Activated CD4-positive, alpha-beta memory T cell treated with anti-CD3 and anti-CD28 coated beads, Interleukin-2, amount 10 ng/mL, durations not matched to agents 7 days and 5 days (primary cell): ENCODE measurements at regions of chr2 and their contacts with region 1.

Region 1: DNA sequence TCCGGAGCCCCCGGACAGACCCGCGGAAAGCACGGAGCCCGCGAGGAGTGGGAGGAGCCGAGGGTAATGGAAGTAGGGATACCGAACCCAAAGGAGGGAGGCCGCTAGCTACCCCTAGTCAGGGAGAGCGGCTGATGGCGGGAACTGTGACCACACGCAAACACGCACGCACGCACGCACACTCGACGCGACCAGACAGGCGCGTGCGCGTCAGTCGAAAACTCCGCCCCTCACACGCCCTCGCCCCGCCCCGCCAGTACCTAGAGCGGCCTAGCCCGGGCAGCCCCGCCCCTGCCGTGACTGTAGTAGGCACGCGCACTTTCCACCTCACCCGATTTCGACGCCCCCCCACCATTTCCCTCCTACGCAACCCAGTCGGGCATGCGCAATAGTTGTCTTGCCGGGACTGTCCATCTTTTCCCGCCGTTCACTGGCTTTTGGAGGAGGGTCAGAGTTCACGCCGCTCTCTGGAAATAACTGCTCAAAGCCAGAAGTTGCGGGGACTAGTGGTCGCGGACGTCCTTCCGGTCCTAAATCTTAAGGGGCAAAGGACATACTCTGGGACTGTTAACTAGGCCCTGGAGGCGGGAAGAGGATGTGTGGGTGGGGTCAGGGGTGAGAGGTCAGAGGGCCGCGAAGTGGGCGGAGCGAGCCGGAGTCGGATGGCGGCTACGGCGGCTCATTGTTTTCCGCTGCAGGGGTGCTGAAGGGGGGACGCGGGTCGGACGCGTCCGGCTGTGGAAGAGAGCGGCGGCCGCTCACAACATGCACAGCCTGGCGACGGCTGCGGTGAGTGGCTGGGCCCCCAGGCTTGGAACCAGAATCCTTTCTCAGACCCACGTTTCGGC is at the starts of genes CNOT9 and USP37:
- DNase-seq: peak; percentile 100
- H3K4me3 Mint-ChIP-seq: peak within 1 kb of the TSS; percentile 93
- H3K27ac Mint-ChIP-seq: peak within 1 kb of the TSS; percentile 99
- H3K4me1 Mint-ChIP-seq: peaks cover 63% of the 10 kb centered on the region
- H3K27me3 Mint-ChIP-seq: no peaks in the 10 kb centered on the region
- total RNA-seq, gene CNOT9: 77.1 to 77.3 TPM
- total RNA-seq, gene USP37: 30.2 to 32.7 TPM

Region 2: DNA sequence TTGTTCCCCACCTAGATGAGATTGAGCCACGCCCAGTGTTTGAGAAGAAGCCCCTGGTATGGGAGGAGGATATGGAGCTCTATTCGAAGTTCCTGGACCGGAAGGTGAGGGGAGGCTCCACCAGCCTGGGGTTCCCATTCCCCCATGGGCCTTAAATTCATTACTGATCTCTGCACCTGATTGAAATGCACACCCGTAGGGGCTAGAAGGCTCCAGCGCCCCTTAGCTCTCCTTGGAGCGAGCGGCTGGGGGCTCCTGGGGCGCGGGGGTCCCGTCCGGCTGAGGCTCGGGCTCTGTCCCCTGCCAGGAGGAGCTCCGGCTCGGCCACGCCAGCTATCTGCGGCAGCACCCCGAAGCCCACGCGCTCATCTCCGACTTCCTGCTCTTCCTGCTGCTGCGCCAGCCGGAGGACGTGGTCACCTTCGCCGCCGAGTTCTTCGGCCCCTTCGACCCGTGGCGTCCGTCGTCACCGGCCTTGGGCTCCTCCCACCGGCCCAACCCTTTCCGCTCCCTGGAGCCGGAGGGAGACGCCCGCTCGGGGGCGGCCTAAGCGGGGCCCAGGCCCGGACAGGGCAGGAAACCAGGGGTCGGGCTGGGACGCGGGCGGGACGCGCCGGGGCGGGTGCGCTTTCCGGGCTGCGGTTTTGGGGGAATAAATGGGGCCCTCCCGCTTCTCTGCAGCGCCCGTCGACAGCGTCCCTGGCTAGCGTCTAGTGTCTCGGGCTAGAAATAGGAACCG is 200.8 kb before region 1 on chr2:
- CTCF ChIA-PET with region 1: no interaction called
- POLR2A ChIA-PET with region 1: no interaction called
- DNase-seq: peak; percentile 82
- H3K4me3 Mint-ChIP-seq: peak overlapping the region; percentile 77
- H3K27ac Mint-ChIP-seq: peak overlapping the region; percentile 74
- H3K4me1 Mint-ChIP-seq: peaks cover 35% of the 10 kb centered on the region
- H3K27me3 Mint-ChIP-seq: peaks cover 7% of the 10 kb centered on the region

Region 3: DNA sequence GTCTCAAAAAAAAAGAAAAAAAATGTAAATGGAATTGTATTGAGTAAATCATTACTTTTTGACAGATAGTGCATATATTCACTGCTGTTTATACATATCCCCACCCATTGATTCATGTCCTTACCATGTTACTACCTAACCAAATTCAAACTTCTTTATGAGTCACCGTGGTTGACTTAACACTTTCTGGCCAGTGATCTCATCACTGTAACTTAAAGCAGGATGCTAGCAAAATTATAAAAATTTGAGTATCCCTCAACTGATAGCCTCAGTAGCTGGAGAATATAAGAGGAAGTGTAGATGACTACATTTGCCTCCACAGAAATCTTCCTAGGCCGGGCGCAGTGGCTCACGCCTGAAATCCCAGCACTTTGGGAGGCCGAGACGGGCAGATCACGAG is 13.7 kb after region 1 on chr2:
- CTCF ChIA-PET with region 1: interaction called, 3 read pairs
- POLR2A ChIA-PET with region 1: interaction called, 15 read pairs
- DNase-seq: no peak
- H3K4me3 Mint-ChIP-seq: no peak overlapping the region
- H3K27ac Mint-ChIP-seq: peak overlapping the region; percentile 80
- H3K4me1 Mint-ChIP-seq: peaks cover 42% of the 10 kb centered on the region
- H3K27me3 Mint-ChIP-seq: no peaks in the 10 kb centered on the region